ENCODE measurements at regions of chr20 and their contacts with region 1.

Region 1: GRCh38 chr20:17059465-17059864 is 167.4 kb upstream of the PCSK2 start:
- DNase-seq: no peak

Region 2: DNA sequence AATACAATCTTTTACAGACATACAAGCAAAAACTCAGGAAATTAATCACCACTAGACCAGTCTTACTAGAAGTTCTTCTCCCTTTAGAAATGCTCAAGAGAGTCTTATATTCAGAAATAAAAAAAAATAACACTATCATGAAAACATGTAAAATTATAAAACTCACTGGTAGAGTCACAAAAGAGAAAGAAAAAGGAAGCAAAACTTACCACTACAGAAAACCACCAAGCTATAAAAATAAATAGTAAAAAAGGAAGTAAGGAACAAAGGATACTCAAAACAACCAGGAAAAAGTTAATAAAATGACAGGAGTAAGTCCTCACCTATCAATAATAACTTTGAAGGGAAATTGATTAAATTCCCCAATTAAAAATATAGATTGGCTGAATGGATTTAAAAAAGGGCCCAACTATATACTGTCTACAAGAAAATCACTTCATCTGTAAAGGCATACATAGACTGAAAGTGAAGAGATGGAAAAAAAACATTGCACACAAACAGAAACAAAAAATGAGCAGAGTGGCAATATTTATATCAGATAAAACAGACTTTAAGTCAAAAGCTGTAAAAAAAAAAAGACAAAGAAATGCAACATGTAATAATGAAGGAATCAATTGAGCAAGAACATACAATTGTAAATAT is 975.7 kb before region 1 on chr20:
- intact Hi-C with region 1: no loop called
- DNase-seq: no peak

Region 3: DNA sequence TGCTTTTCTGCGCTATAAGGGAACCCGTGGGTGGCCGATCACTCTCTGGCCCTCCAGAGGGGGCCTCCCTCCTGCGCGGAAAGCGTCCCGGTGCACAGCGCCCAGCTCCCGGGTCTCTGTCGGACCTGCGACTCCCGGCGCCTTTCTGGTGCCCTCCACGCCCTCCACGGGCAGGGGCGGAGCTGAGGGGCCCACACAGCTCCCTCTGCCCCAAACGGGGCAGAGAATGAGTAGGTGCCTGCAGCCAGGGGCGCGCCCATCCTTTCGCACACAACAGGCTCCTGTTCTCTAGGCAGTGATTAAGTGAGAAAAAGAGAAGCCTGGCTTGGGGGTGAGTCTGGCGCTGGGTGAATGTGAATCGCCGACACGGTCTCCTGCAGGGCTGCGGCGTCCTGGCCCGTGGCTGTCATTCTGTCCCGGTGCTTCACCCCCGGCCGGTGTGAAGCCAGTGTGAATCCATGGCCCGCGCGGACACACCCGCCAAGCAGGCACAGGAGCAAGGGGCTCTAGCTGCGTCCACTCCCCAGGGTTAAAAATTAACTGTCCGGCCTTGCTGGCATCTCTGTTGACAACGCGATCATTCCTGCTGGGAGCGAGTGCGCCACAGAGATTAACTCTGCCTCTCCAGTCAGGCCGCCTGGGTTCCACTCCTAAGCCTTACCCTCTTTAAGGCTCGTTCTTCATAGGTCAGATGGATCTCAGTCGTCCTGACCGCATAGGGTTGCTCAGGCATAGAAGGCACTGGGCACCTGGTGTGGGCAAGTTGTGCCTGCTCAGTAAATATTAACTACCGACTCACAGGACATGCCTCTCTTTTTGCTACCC is 256.2 kb after region 1 on chr20:
- intact Hi-C with region 1: loop called in 1 of 2 experiments (anchors 10 kb)
- DNase-seq: no peak

Region 4: DNA sequence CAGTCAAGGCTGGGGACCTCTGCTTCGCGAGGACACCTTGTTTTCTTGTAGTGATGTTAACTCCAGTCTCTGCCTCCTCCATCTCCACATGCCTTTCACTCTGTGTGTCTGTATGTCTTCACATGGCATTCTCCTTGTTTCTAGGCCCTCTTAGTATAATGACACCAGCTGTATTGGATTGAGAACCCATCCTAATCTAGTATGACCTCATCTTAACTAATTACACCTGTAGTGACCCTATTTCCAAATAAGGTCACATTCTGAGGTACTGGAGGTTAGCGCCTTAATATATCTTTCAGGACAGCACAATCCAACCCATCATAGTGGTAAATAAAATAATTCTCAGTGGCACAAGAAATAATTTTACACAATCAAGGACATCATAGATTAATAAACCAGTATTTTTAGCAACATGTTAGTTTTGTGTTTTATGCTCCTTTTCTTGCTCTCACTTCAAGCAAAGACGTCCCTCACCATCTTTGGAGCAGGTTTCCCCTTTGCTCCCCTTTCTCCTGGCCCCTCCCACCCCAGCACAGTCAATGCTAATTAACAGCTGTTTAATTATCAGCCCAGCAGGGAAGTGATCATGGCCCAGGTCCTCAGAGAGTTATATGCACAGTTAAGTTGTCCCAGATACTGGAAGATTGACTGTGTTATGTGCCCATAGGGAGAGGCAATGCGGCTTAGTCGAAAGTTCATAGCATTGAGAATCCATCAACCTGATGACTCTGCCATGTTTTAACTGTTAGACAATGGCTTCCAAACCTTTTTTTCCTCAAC is 290.7 kb after region 1 on chr20:
- intact Hi-C with region 1: no loop called
- DNase-seq: no peak

Region 5: DNA sequence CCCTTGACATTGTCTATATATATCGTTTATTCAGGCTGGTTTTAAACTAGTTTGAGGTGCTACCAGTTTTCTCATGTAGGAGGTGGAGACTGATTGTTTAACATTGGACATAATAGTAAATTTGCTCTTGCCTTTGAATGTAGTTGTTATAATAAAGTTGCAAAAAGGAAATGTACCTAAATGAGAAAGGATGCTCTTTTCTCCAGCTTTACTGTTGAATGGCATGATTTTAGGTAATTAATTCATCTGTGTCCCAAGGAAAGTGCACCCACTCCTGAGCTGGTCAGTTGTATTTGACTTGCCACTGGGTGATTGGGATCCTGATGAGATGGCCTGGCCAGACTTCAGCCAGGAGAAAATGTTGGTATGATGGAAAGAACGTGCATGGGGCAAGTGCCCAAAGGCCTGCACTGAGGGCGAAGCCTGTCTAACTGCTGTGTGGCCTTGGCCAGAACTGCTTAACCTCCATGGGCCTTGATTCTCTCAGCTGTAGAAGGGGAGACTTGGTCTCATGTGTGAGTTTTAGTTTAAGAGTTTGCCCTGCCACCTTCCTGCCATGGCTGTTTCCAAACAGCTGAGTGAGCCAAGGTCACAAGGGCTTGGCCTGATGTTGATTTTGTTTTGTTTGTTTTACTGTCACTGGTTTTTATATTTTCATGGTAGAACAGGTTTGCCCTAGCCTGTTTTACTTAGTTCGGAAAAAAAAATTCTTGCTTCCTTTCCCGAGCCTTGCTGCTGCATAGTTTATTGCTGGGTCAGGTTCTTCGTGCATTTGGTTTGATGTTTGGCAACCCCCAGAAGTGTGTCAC is 545.6 kb after region 1 on chr20:
- intact Hi-C with region 1: no loop called
- DNase-seq: no peak